ENCODE measurements at regions of chr15 and their contacts with region 1.

Region 1: GRCh38 chr15:62306851-62307504 is 141.9 kb upstream of the C2CD4B start:
- DNase-seq: no peak
- H3K4me3 ChIP-seq: no peak overlapping the region
- H3K27ac ChIP-seq: no peak overlapping the region
- H3K4me1 ChIP-seq: no peaks in the 10 kb centered on the region
- H3K27me3 ChIP-seq: no peaks in the 10 kb centered on the region; a peak in 1 of 7 replicates
- CTCF ChIP-seq: peak; percentile 14 to 87 (median 68)
- EP300 ChIP-seq: no peak
- POLR2A ChIP-seq: no peak
- RAD21 ChIP-seq: peak; percentile 91 to 94

Region 2: GRCh38 chr15:62173215-62173614 is 133.8 kb before region 1 on chr15:
- CTCF ChIA-PET with region 1: interaction called, 14 read pairs
- POLR2A ChIA-PET with region 1: no interaction called
- DNase-seq: no peak
- H3K4me3 ChIP-seq: no peak overlapping the region
- H3K27ac ChIP-seq: no peak overlapping the region
- H3K4me1 ChIP-seq: peaks cover 0 to 2% (median 0%) of the 10 kb centered on the region in 4 experiments; a peak in 1 of 7 replicates
- H3K27me3 ChIP-seq: no peaks in the 10 kb centered on the region
- CTCF ChIP-seq: no peak
- EP300 ChIP-seq: no peak
- POLR2A ChIP-seq: no peak
- RAD21 ChIP-seq: no peak

Region 3: GRCh38 chr15:62241135-62241770 is 65.7 kb before region 1 on chr15:
- CTCF ChIA-PET with region 1: interaction called, 51 read pairs
- POLR2A ChIA-PET with region 1: no interaction called
- DNase-seq: peak; percentile 31 to 81
- H3K4me3 ChIP-seq: no peak overlapping the region
- H3K27ac ChIP-seq: no peak overlapping the region
- H3K4me1 ChIP-seq: peaks cover 0 to 2% (median 0%) of the 10 kb centered on the region in 4 experiments; a peak in 1 of 7 replicates
- H3K27me3 ChIP-seq: no peaks in the 10 kb centered on the region
- CTCF ChIP-seq: peak; percentile 76 to 88 (median 88)
- EP300 ChIP-seq: no peak
- POLR2A ChIP-seq: no peak
- RAD21 ChIP-seq: peak; percentile 26 to 61

Region 4: GRCh38 chr15:62277816-62278394 is 29.1 kb before region 1 on chr15:
- CTCF ChIA-PET with region 1: interaction called, 15 read pairs
- POLR2A ChIA-PET with region 1: no interaction called
- DNase-seq: no peak
- H3K4me3 ChIP-seq: no peak overlapping the region
- H3K27ac ChIP-seq: no peak overlapping the region
- H3K4me1 ChIP-seq: no peaks in the 10 kb centered on the region
- H3K27me3 ChIP-seq: peaks cover 0 to 1% (median 0%) of the 10 kb centered on the region in 4 experiments; a peak in 1 of 7 replicates
- CTCF ChIP-seq: peak in 1 of 3 experiments; percentile 16; a peak in 1 of 4 replicates
- EP300 ChIP-seq: no peak
- POLR2A ChIP-seq: no peak
- RAD21 ChIP-seq: peak; percentile 46 to 57

Region 5: DNA sequence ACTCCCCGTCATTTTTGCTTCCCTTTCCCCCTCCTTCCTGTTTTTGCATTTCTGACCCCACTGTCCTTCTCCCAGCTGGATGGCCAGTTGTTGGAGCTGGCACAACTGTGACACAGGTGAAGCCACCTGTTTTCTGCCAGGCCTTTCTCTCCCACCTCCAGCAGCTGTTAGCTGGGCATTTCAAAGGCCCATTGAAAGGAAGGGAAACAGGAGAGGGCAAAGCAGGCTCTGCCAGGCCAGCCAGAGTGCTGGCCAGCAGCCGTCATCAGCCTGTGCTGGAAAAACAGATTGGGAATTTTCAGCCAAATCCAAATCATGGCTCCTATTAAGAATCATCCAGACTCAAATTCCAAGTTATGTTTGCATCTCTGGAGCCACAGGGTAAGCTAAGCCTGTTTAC is 13.3 kb after region 1 on chr15:
- CTCF ChIA-PET with region 1: interaction called, 18 read pairs
- POLR2A ChIA-PET with region 1: no interaction called
- DNase-seq: no peak
- H3K4me3 ChIP-seq: no peak overlapping the region
- H3K27ac ChIP-seq: no peak overlapping the region
- H3K4me1 ChIP-seq: peaks cover 0 to 3% (median 2%) of the 10 kb centered on the region in 4 experiments; a peak in 3 of 7 replicates
- H3K27me3 ChIP-seq: no peaks in the 10 kb centered on the region
- CTCF ChIP-seq: no peak
- EP300 ChIP-seq: no peak
- POLR2A ChIP-seq: no peak
- RAD21 ChIP-seq: no peak

Measured in H1 (cell line).